Motor neuron (in vitro differentiated cells): ENCODE measurements at regions of chr5 and their contacts with region 1.

Region 1: DNA sequence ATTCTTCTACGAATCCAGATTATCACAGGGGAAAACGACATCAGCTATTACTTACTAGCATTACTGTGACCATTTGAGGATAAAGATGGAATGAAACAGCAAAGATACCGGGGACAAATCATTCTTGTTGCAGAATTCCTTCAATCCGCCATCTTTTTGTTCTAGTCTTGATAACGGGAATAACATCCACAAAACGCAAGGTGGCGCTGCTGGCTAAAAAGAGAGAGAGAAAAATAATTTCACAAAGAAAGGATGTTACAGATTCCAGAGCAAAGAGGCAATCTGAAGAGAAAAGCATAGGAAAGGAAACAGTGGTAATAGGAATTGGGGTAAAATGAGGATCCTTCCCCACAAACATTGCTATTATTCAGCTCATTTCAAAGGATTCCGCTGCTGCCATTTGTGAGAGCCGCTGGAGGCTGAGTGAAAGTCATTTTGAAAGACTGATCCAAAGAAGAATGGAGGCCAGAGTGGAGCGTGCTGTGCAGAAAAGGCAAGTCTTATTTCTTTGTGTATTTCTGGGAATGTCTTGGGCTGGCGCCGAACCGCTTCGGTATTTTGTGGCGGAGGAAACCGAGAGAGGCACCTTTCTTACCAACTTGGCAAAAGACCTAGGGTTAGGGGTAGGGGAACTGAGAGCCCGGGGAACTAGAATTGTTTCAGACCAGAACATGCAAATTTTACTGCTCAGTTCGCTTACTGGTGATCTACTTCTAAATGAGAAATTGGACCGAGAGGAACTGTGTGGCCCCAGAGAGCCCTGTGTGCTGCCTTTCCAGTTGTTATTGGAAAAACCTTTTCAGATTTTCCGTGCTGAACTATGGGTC is at the start of gene PCDHB7:
- ATAC-seq: peak in 1 of 8 experiments; percentile 27
- H3K4me3 ChIP-seq: peak within 1 kb of the TSS in 1 of 5 donors; percentile 25
- H3K27ac ChIP-seq: no peak within 1 kb of the TSS
- H3K4me1 ChIP-seq: no peaks in the 10 kb centered on the region
- total RNA-seq, gene PCDHB7: 0.20 to 2.0 (median 0.50) TPM

Region 2: GRCh38 chr5:141260458-141261237 is 88.1 kb after region 1 on chr5:
- in situ Hi-C with region 1: loop called in 1 of 9 experiments (anchors 25 kb)
- ATAC-seq: no peak
- H3K4me3 ChIP-seq: no peak overlapping the region
- H3K27ac ChIP-seq: no peak overlapping the region
- H3K4me1 ChIP-seq: no peaks in the 10 kb centered on the region

Region 3: GRCh38 chr5:142201471-142201887 is 1028.9 kb after region 1 on chr5:
- in situ Hi-C with region 1: no loop called
- ATAC-seq: peak in 2 of 8 experiments; percentile 58 to 90
- H3K4me3 ChIP-seq: no peak overlapping the region
- H3K27ac ChIP-seq: no peak overlapping the region
- H3K4me1 ChIP-seq: peaks cover 0 to 8% of the 10 kb centered on the region in 2 donors